ENCODE measurements at regions of chr2 and their contacts with region 1.

Region 1: DNA sequence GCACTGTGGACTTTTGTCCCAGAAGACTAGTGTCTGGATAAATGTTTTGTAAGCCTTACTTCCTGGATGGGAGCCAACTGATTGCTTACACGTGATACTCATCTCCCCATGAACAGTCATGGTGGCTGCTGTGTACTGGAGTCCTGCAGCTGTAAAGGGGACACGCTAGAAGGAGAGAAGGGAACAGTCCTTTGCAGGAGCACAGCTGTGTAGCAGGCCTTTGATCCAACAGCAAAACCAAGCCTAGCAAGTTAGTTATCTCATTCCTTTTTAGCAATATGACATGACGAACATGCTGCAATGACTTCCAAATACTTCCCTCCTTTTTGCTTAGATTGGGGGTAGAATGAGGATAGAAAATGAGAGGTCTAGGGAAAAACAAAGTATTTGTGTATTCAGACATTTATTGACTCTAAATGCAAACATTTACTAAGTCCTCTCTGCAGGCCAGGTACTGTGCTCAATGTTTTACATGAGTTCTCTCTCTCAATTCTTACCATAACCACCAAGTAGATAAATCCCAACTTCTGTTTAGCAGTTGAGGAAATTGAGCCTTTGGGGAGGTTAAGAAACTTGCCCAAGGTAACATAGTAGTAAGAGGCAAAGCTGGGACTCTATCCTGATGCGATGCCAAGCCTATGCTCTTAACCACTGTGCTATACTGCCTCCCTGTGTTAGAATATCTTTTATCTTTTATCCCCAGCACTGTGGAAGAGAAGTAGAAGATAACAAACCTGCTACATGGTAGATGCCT is 55.4 kb upstream of the CD28 start:
- H3K4me3 Mint-ChIP-seq: no peak overlapping the region
- H3K27ac Mint-ChIP-seq: peak overlapping the region; percentile 94
- H3K4me1 Mint-ChIP-seq: peaks cover 57% of the 10 kb centered on the region
- H3K27me3 Mint-ChIP-seq: no peaks in the 10 kb centered on the region

Region 2: GRCh38 chr2:203484266-203485112 is 166.5 kb before region 1 on chr2:
- intact Hi-C with region 1: loop called (anchors 1 kb)
- H3K4me3 Mint-ChIP-seq: no peak overlapping the region
- H3K27ac Mint-ChIP-seq: no peak overlapping the region
- H3K4me1 Mint-ChIP-seq: no peaks in the 10 kb centered on the region
- H3K27me3 Mint-ChIP-seq: no peaks in the 10 kb centered on the region

Region 3: DNA sequence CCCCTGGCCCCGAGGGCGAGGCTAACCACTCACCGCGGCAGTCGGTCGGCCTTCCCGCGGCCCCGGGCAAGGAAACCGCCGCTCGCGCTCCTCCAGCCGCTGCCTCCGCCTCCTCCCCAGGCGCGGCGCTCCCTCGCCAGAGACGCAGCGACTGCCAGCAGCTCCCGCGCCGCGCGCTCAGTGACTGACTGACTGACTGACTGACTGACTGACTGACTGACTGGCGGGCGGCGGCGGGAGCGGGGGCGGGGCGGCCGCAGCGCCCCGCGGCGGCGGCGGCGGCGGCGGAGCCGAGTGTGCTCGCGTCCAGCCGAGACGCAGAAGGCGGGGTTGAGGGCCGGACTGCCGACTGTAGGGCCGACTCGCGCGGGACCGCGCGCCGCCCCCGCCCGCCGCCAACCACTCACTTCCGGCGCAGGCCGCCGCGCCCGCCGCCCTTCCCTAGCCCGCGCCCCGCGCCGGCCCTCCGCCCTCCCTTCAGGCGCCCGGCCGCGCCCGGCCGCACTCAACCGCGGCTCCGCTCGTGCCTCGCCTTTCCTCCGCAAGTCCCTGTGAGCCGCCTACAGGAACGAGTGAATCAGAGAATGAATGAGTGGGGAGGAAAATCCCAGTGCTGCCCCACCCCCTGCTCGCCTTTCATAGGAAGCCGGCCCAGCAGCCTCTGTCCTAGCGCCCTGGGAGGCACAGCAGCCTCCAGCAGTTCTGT is 115.8 kb before region 1 on chr2 and contains the start of gene RAPH1:
- intact Hi-C with region 1: loop called (anchors 5 kb)
- H3K4me3 Mint-ChIP-seq: peak within 1 kb of the TSS; percentile 84
- H3K27ac Mint-ChIP-seq: peak within 1 kb of the TSS; percentile 91
- H3K4me1 Mint-ChIP-seq: peaks cover 26% of the 10 kb centered on the region
- H3K27me3 Mint-ChIP-seq: peaks cover 49% of the 10 kb centered on the region

Region 4: DNA sequence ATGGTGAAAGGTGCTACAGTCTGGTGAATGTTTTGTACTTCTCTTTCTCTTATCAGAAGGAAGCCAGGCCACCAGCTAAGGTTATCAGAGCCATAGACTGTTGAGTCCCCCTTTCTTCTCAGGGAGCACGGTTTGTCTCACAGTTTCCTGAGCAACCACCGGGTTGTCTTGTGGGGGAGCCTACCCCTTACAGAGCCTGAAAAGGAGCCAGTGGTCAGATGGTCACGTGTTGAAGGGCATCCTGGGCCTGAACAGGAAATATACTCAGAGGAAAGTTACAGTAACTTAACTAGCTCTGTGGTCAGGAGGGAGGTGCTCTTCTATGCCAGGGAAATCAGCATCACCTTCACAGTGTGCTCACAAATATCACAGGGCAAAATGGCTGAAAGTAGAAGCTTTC is 67.0 kb after region 1 on chr2:
- intact Hi-C with region 1: no loop called
- H3K4me3 Mint-ChIP-seq: no peak overlapping the region
- H3K27ac Mint-ChIP-seq: no peak overlapping the region
- H3K4me1 Mint-ChIP-seq: peaks cover 10% of the 10 kb centered on the region
- H3K27me3 Mint-ChIP-seq: peaks cover 4% of the 10 kb centered on the region

Region 5: DNA sequence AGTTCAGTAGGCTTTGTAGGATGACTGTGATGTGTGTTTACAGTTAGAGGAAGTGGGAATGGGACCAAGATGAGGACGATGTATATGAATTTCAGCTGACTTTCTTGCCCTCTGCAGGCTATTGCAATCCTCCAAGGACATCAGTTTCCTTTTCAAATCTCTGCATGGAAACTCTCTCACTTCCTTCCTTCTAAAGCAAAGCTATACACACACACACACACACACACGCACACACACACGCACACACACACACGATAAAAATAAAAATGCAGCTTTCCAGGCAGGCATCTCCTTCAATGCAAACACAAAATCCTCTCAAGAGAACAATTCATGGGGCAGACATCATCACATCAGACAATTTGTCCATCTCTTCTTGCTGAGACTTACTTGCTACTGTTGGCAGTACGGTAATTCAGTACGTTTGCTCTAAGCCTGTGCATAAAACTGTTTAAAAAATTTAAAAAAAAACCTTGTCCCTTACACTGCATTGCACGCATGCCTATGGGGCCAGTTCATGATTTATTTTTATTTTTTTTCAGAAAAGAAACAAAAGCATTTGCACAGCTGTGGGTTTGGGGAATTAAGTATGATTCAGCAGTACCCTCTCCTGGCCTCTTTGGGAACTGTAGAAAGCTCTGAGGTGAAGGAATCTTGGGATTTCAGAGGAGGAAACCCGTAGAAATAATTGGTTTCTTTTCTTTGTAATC is 258.4 kb after region 1 on chr2:
- intact Hi-C with region 1: loop called (anchors 2 kb)
- H3K4me3 Mint-ChIP-seq: peak overlapping the region; percentile 68
- H3K27ac Mint-ChIP-seq: peak overlapping the region; percentile 88
- H3K4me1 Mint-ChIP-seq: peaks cover 22% of the 10 kb centered on the region
- H3K27me3 Mint-ChIP-seq: no peaks in the 10 kb centered on the region